CD8-positive, alpha-beta T cell (primary cell): ENCODE measurements at regions of chr11 and their contacts with region 1.

Region 1: GRCh38 chr11:9285850-9286587 is 20.9 kb upstream of the DENND5A start:
- DNase-seq: no peak
- ATAC-seq: no peak
- H3K4me3 ChIP-seq: no peak overlapping the region
- H3K4me3 Mint-ChIP-seq: no peak overlapping the region
- H3K27ac ChIP-seq: no peak overlapping the region
- H3K27ac Mint-ChIP-seq: no peak overlapping the region
- H3K4me1 ChIP-seq: peaks cover 4% of the 10 kb centered on the region
- H3K4me1 Mint-ChIP-seq: peaks cover 6% of the 10 kb centered on the region
- H3K27me3 ChIP-seq: no peaks in the 10 kb centered on the region
- H3K27me3 Mint-ChIP-seq: no peaks in the 10 kb centered on the region
- CTCF ChIP-seq: no peak

Region 2: DNA sequence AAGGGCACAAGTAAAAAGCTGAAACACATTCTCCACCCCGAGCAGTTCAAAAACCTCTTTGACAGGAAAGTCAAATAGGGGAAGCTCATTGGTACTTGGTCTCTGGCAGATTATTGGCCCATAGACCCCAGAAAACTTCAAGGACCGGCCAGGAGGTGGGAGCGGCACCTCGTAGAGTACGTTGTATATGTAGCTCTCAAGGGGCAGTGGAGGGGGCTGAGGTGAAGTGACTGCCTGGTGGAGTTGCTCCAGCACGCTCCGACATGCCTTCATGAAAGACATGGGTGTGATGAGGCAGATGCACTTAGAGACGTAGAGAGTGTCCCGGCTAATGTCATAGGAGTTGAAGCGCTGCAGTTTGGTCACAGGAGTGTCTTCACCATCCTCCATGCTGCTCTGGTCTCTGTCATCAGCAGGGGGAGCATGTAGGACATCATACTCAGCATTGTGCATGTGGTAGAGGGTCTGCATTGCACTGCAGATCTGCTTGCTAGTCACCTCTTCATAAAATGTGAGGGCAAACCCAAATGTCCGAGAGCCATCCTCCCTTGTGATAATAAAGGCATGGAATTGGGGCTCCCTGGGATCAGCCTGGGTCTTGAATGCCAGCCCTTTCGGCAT is 82.2 kb before region 1 on chr11:
- CTCF ChIA-PET with region 1: interaction called, 5 read pairs
- POLR2A ChIA-PET with region 1: no interaction called
- intact Hi-C with region 1: loop called (anchors 5 kb)
- DNase-seq: peak in 6 of 9 experiments; percentile 3 to 62 (median 34)
- ATAC-seq: peak; percentile 70
- H3K4me3 ChIP-seq: no peak overlapping the region
- H3K4me3 Mint-ChIP-seq: no peak overlapping the region
- H3K27ac ChIP-seq: no peak overlapping the region
- H3K27ac Mint-ChIP-seq: no peak overlapping the region
- H3K4me1 ChIP-seq: peaks cover 3% of the 10 kb centered on the region
- H3K4me1 Mint-ChIP-seq: peaks cover 28% of the 10 kb centered on the region
- H3K27me3 ChIP-seq: no peaks in the 10 kb centered on the region
- H3K27me3 Mint-ChIP-seq: no peaks in the 10 kb centered on the region
- CTCF ChIP-seq: no peak

Region 3: GRCh38 chr11:9716275-9717039 is 430.4 kb after region 1 on chr11:
- CTCF ChIA-PET with region 1: no interaction called
- POLR2A ChIA-PET with region 1: no interaction called
- intact Hi-C with region 1: no loop called
- DNase-seq: peak in 1 of 9 experiments; percentile 23
- ATAC-seq: no peak
- H3K4me3 ChIP-seq: no peak overlapping the region
- H3K4me3 Mint-ChIP-seq: no peak overlapping the region
- H3K27ac ChIP-seq: no peak overlapping the region
- H3K27ac Mint-ChIP-seq: no peak overlapping the region
- H3K4me1 ChIP-seq: no peaks in the 10 kb centered on the region
- H3K4me1 Mint-ChIP-seq: peaks cover 17% of the 10 kb centered on the region
- H3K27me3 ChIP-seq: no peaks in the 10 kb centered on the region
- H3K27me3 Mint-ChIP-seq: peaks cover 3% of the 10 kb centered on the region
- CTCF ChIP-seq: no peak